ENCODE measurements at regions of chr9 and their contacts with region 1.

Region 1: DNA sequence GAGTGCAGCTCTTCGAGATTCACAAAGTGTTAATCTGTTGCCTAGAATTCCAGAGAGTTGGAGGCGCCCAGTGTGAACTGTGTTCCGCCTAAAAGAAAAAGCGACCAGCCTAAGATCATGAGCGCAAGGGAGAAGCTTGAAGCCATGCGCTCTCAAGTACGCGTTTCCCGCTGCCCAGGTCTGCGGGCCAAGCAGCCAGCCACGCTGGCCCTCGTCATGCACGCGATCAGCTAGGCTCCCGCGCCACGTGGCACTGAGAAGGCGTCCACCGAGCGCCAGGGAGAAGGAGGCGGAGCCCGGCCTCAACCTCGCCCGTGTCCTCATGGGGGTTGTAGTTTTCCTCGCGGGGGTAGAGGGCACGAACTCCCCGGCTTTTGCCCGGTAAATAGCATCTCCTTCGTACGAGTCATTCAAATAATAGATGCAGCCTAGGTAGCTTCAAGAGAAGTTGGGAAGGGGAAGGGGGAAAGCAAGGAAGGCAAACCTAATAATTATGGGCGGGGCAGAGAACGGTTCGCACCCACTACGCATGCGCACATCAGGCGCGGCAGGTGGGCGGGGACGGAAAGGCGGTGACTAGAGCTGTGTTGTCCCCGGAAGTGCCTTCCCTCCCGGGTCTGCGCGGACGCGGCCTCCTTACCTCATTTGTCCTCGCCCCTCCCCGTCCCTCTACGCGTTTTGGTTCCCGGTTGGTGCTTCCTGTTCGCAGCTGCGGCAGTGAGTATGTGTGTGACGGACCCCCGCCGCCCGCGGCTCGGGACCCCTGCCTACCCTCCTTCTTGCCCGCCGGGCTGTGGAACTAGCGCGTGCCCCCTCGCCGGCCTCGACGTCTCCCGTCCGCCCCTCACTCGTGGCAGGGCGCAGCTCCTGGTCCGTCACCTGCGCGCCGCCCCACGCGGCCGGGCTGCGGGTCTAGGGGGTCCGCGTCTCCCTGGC is at the start of gene ZCCHC7:
- DNase-seq: peak; percentile 86
- ATAC-seq: peak; percentile 97
- H3K4me3 ChIP-seq: peak within 1 kb of the TSS; percentile 90
- H3K27ac ChIP-seq: peak within 1 kb of the TSS; percentile 37
- H3K4me1 ChIP-seq: peaks cover 3% of the 10 kb centered on the region; the same call in 1 of the 2 replicates
- H3K27me3 ChIP-seq: no peaks in the 10 kb centered on the region
- CTCF ChIP-seq: no peak
- total RNA-seq, gene ZCCHC7: 6.5 and 9.1 TPM in 2 replicates

Region 2: GRCh38 chr9:37156781-37157356 is 36.7 kb after region 1 on chr9:
- CTCF ChIA-PET with region 1: no interaction called
- POLR2A ChIA-PET with region 1: no interaction called
- intact Hi-C with region 1: no loop called
- DNase-seq: peak; percentile 36
- ATAC-seq: no peak
- H3K4me3 ChIP-seq: no peak overlapping the region
- H3K27ac ChIP-seq: no peak overlapping the region
- H3K4me1 ChIP-seq: peaks cover 9% of the 10 kb centered on the region
- H3K27me3 ChIP-seq: no peaks in the 10 kb centered on the region
- CTCF ChIP-seq: no peak

Region 3: GRCh38 chr9:37229882-37230487 is 109.8 kb after region 1 on chr9:
- CTCF ChIA-PET with region 1: interaction called, 3 read pairs
- POLR2A ChIA-PET with region 1: no interaction called
- intact Hi-C with region 1: loop called (anchors 10 kb)
- DNase-seq: peak; percentile 89
- ATAC-seq: peak; percentile 86
- H3K4me3 ChIP-seq: no peak overlapping the region
- H3K27ac ChIP-seq: peak overlapping the region; percentile 60
- H3K4me1 ChIP-seq: peaks cover 10% of the 10 kb centered on the region
- H3K27me3 ChIP-seq: no peaks in the 10 kb centered on the region
- CTCF ChIP-seq: no peak

Measured in PC-3 (cell line).